Heart right ventricle (tissue), 16 donors: ENCODE measurements at regions of chr7 and their contacts with region 1.

Region 1: GRCh38 chr7:158782761-158783401 is 46.4 kb downstream of the ESYT2 start:
- DNase-seq: peak; percentile 55 to 85
- ATAC-seq: peak; percentile 85 to 96 (median 94)
- H3K4me3 ChIP-seq: peak overlapping the region in 6 of 10 donors; percentile 3 to 36 (median 19)
- H3K27ac ChIP-seq: peak overlapping the region; percentile 68 to 90 (median 81)
- H3K4me1 ChIP-seq: peaks cover 13 to 59% (median 42%) of the 10 kb centered on the region in 9 donors
- H3K27me3 ChIP-seq: no peaks in the 10 kb centered on the region
- CTCF ChIP-seq: peak in 8 of 9 donors; percentile 31 to 79 (median 54)

Region 2: DNA sequence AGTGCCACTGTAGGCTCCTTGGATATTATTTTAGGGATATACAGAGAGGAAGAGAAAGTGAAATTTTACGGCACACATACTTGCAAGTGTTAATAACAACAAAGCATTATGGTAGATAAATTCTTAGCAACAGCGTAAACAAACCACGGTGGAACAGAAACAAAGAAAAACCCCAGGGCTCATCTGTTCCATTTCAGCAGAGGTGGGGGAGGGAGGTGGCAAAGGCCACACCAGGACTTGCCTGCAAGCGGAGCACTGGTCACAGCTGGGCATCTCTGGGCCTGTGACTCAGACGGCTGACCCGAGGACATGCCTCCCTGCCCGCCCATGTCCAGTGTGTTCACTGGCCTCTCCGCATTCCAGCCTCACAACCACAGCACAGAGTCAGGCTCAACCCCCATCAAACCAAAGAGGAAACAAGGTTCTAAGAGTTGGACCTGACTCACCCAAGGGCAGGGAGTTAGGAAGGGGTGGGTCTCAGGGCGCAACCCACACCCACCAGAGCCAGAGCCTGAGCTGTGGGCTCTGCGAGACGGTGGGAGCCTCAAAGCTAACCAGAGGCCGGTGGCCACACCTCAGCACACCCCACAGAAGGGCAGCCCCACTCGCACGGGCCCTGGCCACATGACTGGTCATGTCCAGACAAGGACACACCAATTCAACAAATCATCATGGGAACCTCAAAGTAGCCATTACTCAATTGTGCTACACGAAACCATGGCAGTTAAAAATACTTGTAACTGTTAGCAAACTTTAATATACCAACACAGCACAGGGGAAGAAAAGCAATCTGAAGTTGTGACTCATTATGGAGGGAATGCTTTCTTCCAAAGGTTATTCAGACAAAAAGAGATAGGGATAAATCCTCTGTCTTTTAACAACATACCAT is 35.7 kb after region 1 on chr7:
- intact Hi-C with region 1: loop called in 2 of 10 experiments (anchors 5 kb)
- DNase-seq: peak; percentile 83 to 91
- ATAC-seq: peak; percentile 82 to 94 (median 88)
- H3K4me3 ChIP-seq: peak overlapping the region in 9 of 10 donors; percentile 2 to 41 (median 36)
- H3K27ac ChIP-seq: peak overlapping the region; percentile 90 to 94 (median 92)
- H3K4me1 ChIP-seq: peaks cover 35 to 95% (median 88%) of the 10 kb centered on the region in 9 donors
- H3K27me3 ChIP-seq: no peaks in the 10 kb centered on the region
- CTCF ChIP-seq: peak in 2 of 9 donors; percentile 11 to 23

Region 3: DNA sequence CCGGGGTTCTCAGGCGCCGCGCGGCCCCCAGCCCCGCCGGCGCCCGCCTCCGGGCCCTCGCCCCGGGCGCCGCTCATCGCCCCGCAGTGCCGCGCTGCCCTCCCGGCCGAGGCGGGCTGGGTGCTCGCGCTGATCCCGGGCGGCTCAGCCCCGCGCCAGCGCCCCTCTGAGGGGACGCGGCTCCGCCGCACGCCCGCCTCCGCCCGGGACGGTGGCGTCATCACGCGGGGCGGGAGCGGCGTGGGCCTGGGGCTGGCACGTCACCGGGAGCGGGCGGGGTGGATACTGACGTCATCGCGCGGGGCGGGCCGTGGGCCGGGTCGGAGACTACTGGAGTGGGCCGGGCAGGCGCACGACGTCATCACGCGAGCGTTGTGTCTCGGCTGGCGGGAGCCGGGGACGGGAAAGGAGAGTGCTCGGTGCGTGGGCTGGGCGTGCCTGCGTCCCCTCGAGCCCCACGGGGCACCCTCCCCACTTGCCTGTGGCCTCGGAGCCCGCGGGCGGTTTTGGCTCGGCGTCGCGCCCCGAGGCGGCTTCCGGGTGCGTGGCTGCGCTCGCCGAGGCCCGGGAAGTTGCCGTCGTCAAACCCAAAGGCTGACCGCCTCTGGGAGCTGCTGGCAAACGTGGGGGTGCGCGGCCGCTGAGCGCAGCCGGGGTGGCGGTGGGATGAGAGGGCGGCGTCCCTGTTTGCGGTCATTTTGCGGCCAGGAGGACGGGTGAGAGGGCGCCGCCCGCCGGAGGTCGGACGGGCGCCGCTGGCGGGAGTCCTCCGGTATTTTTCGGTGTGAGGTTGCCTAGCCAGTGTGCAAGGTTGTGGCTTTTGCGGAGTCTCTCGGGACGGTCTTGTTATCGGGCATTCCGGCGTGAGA is 46.7 kb after region 1 on chr7 and contains the start of gene ESYT2:
- intact Hi-C with region 1: loop called in 6 of 10 experiments (anchors 1 to 10 kb)
- DNase-seq: peak; percentile 99 to 100
- ATAC-seq: peak; percentile 94 to 98 (median 96)
- H3K4me3 ChIP-seq: peak within 1 kb of the TSS; percentile 74 to 99 (median 94)
- H3K27ac ChIP-seq: peak within 1 kb of the TSS; percentile 94 to 100 (median 100)
- H3K4me1 ChIP-seq: peaks cover 0 to 43% (median 29%) of the 10 kb centered on the region in 9 donors
- H3K27me3 ChIP-seq: no peaks in the 10 kb centered on the region
- CTCF ChIP-seq: peak in 4 of 9 donors; percentile 18 to 41 (median 36)
- total RNA-seq, gene ESYT2: 44.3 to 79.2 (median 50.0) TPM

Region 4: DNA sequence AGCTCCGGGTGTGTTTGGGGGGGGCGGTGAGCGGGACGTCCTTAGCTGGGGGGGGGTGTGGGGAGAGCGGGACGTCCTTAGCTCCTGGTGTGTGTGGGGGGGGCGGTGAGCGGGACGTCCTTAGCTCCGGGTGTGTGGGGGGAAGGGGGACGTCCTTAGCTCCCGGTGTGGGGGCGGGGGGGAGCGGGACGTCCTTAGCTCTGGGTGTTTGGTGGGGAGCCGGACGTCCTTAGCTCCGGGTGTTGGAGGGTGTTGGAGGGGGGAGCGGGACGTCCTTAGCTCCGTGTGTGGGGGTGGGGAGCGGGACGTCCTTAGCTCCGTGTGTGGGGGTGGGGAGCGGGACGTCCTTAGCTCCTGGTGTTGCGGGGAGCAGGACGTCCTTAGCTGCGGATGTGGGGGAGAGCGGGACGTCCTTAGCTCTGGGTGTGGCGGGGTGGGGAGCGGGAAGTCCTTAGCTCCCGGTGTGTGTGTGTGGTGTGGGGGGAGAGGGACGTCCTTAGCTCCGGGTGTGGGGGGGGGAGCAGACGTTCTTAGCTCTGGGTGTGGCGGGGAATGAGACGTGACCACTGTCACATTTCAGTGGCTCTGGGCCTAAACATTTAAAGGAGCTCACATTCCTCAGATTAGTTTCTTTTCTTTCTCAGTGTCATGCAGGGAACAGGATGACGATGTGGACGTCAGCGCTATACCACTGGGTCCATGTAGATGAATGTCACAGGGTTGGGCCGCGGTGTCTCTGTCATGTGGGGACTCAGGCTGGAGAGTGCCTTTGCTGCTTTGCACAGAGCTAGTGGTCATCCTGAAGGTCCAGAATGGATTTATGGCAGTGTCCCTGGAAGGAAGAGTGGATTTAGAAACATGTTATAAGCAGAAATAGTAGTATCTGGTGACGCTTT is 81.0 kb after region 1 on chr7:
- intact Hi-C with region 1: loop called in 1 of 10 experiments (anchors 10 kb)
- DNase-seq: peak; percentile 80 to 84
- ATAC-seq: peak; percentile 87 to 93 (median 90)
- H3K4me3 ChIP-seq: peak overlapping the region in 9 of 10 donors; percentile 30 to 55 (median 51)
- H3K27ac ChIP-seq: peak overlapping the region; percentile 85 to 98 (median 92)
- H3K4me1 ChIP-seq: peaks cover 15 to 64% (median 36%) of the 10 kb centered on the region in 9 donors
- H3K27me3 ChIP-seq: no peaks in the 10 kb centered on the region
- CTCF ChIP-seq: no peak

Region 5: DNA sequence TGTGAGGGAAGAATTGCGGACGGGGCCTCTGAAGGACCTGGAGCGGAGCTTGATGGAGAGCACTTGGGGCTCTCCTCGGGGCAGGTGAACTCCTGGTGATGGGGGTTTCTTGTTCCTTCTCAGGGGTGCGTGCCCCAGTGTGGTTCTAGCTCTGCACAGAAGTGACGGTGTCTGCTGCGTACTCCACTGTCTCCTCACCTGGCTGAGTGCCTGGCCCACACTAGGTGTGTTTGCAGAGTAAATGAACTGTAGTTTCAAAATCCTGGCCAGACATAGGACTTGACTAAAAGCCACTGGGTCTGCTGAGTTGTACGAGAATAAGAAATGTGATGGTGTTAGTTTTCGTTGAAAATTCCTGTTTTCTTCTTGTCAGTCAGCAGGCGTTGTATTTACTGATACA is 109.0 kb after region 1 on chr7:
- intact Hi-C with region 1: loop called in 3 of 10 experiments (anchors 10 kb)
- DNase-seq: no peak
- ATAC-seq: no peak
- H3K4me3 ChIP-seq: no peak overlapping the region
- H3K27ac ChIP-seq: no peak overlapping the region
- H3K4me1 ChIP-seq: peaks cover 0 to 6% (median 0%) of the 10 kb centered on the region in 9 donors
- H3K27me3 ChIP-seq: no peaks in the 10 kb centered on the region
- CTCF ChIP-seq: no peak

Region 6: GRCh38 chr7:158976849-158977593 is 194.1 kb after region 1 on chr7:
- intact Hi-C with region 1: loop called in 4 of 10 experiments (anchors 5 to 10 kb)
- DNase-seq: peak; percentile 82 to 86
- ATAC-seq: peak; percentile 73 to 94 (median 83)
- H3K4me3 ChIP-seq: peak overlapping the region in 9 of 10 donors; percentile 20 to 55 (median 43)
- H3K27ac ChIP-seq: peak overlapping the region in 4 of 10 donors; percentile 36 to 57 (median 50)
- H3K4me1 ChIP-seq: peaks cover 0 to 15% (median 12%) of the 10 kb centered on the region in 9 donors
- H3K27me3 ChIP-seq: no peaks in the 10 kb centered on the region
- CTCF ChIP-seq: peak; percentile 78 to 91 (median 89)